H1 (cell line): ENCODE measurements at regions of chr4 and their contacts with region 1.

Region 1: GRCh38 chr4:174120446-174121295 is 162.8 kb downstream of the FBXO8 start:
- DNase-seq: no peak
- H3K4me3 ChIP-seq: peak overlapping the region in 3 of 4 experiments; percentile 13 to 49 (median 17); a peak in 3 of 8 replicates
- H3K27ac ChIP-seq: no peak overlapping the region
- H3K4me1 ChIP-seq: no peaks in the 10 kb centered on the region
- H3K27me3 ChIP-seq: no peaks in the 10 kb centered on the region
- CTCF ChIP-seq: peak in 2 of 3 experiments; percentile 43 to 53; a peak in 2 of 4 replicates
- EP300 ChIP-seq: no peak
- POLR2A ChIP-seq: no peak
- RAD21 ChIP-seq: peak; percentile 50

Region 2: GRCh38 chr4:173990126-173990868 is 130.4 kb before region 1 on chr4:
- CTCF ChIA-PET with region 1: interaction called, 10 read pairs
- POLR2A ChIA-PET with region 1: no interaction called
- DNase-seq: peak in 1 of 2 experiments; percentile 17
- H3K4me3 ChIP-seq: no peak overlapping the region
- H3K27ac ChIP-seq: no peak overlapping the region
- H3K4me1 ChIP-seq: no peaks in the 10 kb centered on the region
- H3K27me3 ChIP-seq: no peaks in the 10 kb centered on the region
- CTCF ChIP-seq: peak in 2 of 3 experiments; percentile 52 to 57; a peak in 3 of 4 replicates
- EP300 ChIP-seq: no peak
- POLR2A ChIP-seq: no peak
- RAD21 ChIP-seq: peak; percentile 64 to 71

Region 3: GRCh38 chr4:174107746-174108354 is 12.8 kb before region 1 on chr4:
- CTCF ChIA-PET with region 1: interaction called, 24 read pairs
- POLR2A ChIA-PET with region 1: no interaction called
- DNase-seq: no peak
- H3K4me3 ChIP-seq: no peak overlapping the region
- H3K27ac ChIP-seq: no peak overlapping the region
- H3K4me1 ChIP-seq: peaks cover 0 to 4% (median 0%) of the 10 kb centered on the region in 4 experiments; a peak in 1 of 7 replicates
- H3K27me3 ChIP-seq: no peaks in the 10 kb centered on the region
- CTCF ChIP-seq: peak in 1 of 3 experiments; percentile 30; a peak in 1 of 4 replicates
- EP300 ChIP-seq: no peak
- POLR2A ChIP-seq: no peak
- RAD21 ChIP-seq: peak; percentile 33 to 44; a peak in 3 of 4 replicates

Region 4: DNA sequence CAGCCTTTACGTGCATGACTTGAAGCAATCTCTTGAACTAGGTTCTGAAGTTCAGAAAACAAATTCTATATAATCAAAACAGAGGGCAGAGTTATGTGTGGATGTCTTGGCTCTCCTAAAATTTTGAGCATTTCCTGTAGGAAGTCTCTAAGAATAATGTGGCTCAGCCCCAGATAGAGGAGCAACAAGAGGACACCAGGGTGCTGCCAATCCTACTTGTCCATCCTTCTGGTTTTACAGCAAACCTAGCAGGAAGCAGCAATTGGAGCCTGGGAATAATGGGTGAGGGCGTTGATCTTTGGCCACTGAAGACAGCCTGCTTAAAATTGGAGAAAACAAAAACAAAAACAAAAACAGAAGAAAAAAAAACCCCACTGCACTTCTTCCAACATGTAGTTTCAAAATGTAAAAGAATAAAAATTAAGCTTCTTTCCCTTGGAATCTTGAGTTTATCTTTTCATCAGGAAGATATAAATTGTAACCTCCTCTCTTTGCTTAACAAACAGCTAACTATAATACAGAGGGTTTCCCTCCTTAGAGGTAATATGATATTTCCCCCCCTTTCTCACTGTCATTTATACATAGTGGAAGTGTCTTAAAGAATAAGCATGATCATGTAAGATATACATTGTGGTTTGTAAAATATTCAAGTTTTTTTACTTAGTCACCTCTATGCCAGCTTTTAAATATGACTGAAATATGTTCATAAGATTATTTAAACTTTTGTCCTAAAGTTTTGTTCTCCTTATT is 32.2 kb after region 1 on chr4:
- CTCF ChIA-PET with region 1: interaction called, 15 read pairs
- POLR2A ChIA-PET with region 1: no interaction called
- DNase-seq: no peak
- H3K4me3 ChIP-seq: no peak overlapping the region
- H3K27ac ChIP-seq: no peak overlapping the region
- H3K4me1 ChIP-seq: no peaks in the 10 kb centered on the region
- H3K27me3 ChIP-seq: no peaks in the 10 kb centered on the region
- CTCF ChIP-seq: no peak
- EP300 ChIP-seq: no peak
- POLR2A ChIP-seq: no peak
- RAD21 ChIP-seq: no peak